ENCODE measurements at regions of chr4 and their contacts with region 1.

Region 1: DNA sequence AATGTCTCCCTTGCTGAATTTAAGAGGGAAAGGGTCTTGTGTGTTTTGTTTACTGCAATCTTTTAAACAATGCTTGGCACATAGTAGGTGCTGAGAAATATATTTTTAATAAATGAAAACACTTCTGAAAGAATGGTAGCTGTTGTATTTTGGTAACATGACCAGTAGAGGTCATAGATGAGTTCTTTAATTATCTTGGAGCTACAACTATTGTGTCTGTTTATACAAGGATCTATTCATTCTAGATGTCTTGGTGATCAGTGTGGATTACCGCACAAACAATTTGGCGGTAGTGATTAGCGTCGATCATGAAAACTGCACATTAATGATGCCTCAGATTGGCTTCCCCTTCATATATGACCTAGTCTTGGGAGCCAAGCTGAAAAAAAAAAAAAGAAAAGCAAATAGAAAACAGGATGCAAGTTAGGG is 21.4 kb upstream of the SCRG1 start:
- DNase-seq: no peak
- ATAC-seq: no peak
- H3K4me3 Mint-ChIP-seq: no peak overlapping the region
- H3K27ac Mint-ChIP-seq: no peak overlapping the region
- H3K4me1 Mint-ChIP-seq: peaks cover 3% of the 10 kb centered on the region
- H3K27me3 Mint-ChIP-seq: no peaks in the 10 kb centered on the region
- CTCF ChIP-seq: no peak

Region 2: GRCh38 chr4:173025131-173025530 is 395.2 kb before region 1 on chr4:
- CTCF ChIA-PET with region 1: no interaction called
- POLR2A ChIA-PET with region 1: no interaction called
- intact Hi-C with region 1: loop called (anchors 1 kb)
- DNase-seq: no peak
- ATAC-seq: no peak
- H3K4me3 Mint-ChIP-seq: no peak overlapping the region
- H3K27ac Mint-ChIP-seq: no peak overlapping the region
- H3K4me1 Mint-ChIP-seq: peaks cover 3% of the 10 kb centered on the region
- H3K27me3 Mint-ChIP-seq: no peaks in the 10 kb centered on the region
- CTCF ChIP-seq: no peak

Region 3: GRCh38 chr4:173074501-173074946 is 345.8 kb before region 1 on chr4:
- CTCF ChIA-PET with region 1: no interaction called
- POLR2A ChIA-PET with region 1: no interaction called
- intact Hi-C with region 1: no loop called
- DNase-seq: no peak
- ATAC-seq: no peak
- H3K4me3 Mint-ChIP-seq: no peak overlapping the region
- H3K27ac Mint-ChIP-seq: no peak overlapping the region
- H3K4me1 Mint-ChIP-seq: no peaks in the 10 kb centered on the region
- H3K27me3 Mint-ChIP-seq: no peaks in the 10 kb centered on the region
- CTCF ChIP-seq: no peak

Region 4: DNA sequence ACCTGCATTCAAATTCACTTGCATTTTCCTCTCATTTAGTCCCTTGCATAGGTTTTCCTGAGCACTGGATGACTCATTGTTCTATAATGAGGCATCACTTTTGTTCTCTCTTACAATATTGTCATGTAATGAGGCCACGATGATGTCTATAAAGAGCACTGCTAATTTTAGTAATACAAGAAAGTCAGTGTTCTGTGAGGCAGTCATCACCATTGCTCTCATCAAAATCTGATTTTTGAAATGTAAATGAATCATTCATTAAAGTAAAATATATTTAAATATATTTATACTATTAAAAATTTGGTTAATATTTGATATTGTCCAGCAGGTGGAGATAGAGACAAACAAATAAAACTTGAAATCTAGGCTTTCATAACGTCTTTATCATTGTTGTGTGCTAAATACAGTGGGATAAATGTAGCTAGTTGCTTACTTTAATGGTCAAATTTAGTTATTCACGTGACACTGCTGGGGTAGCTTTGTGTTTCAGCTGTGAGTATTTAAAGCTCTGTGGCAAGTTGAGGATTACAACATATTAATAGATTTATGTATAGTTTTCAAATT is 101.6 kb before region 1 on chr4:
- CTCF ChIA-PET with region 1: interaction called, 139 read pairs
- POLR2A ChIA-PET with region 1: no interaction called
- intact Hi-C with region 1: loop called (anchors 1 kb)
- DNase-seq: no peak
- ATAC-seq: no peak
- H3K4me3 Mint-ChIP-seq: no peak overlapping the region
- H3K27ac Mint-ChIP-seq: no peak overlapping the region
- H3K4me1 Mint-ChIP-seq: no peaks in the 10 kb centered on the region
- H3K27me3 Mint-ChIP-seq: no peaks in the 10 kb centered on the region
- CTCF ChIP-seq: peak; percentile 48

Region 5: GRCh38 chr4:173432430-173432829 is 12.1 kb after region 1 on chr4:
- CTCF ChIA-PET with region 1: no interaction called
- POLR2A ChIA-PET with region 1: no interaction called
- intact Hi-C with region 1: no loop called
- DNase-seq: no peak
- ATAC-seq: no peak
- H3K4me3 Mint-ChIP-seq: no peak overlapping the region
- H3K27ac Mint-ChIP-seq: no peak overlapping the region
- H3K4me1 Mint-ChIP-seq: no peaks in the 10 kb centered on the region
- H3K27me3 Mint-ChIP-seq: no peaks in the 10 kb centered on the region
- CTCF ChIP-seq: no peak

Region 6: DNA sequence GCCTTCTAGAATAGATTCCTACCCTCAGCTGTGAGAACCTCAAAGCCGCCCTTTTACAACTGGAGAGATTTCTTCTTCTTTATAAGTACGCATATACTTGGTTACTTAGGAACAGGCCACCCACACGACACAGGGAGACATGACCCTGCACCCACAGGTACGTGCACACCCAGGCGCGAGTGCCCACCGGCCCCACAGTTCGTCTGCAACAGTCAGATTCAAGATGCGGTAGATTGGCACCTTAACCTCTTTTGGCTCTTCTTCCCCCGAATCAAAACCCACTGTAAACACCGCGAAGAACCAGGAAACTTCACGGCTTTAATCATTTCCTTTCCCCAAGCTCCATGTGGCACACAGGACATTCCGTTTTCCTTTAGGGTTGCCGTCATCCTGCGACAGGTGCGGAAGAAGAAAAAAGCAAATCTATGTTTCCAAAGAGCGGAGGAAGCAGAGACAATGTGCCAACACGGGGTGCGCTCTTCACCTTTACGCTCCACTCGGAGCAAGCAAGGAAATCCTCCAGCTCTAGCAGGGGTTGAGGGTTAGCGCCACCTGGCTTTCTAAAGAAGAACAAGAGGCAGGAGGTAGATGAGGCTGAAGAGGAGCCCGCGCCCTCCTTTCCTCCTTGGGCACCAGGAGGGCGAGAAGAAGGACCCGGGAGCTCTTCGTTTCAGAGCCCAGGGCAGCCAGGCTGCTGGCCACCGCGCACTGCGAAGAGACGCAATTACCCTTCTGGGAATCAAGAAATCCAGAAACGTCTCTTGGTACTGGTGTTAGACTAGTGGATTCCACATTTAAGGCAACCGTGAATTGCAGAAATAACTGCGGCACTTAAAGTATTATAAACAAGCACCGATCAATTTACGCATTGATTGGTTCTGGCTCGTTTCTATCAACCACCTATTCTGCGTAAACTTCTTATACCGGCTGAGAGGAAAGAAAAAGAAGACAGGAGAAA is 74.0 kb after region 1 on chr4:
- CTCF ChIA-PET with region 1: interaction called, 10 read pairs
- POLR2A ChIA-PET with region 1: interaction called, 4 read pairs
- intact Hi-C with region 1: loop called (anchors 1 kb)
- DNase-seq: no peak
- ATAC-seq: peak; percentile 86
- H3K4me3 Mint-ChIP-seq: peak overlapping the region; percentile 83
- H3K27ac Mint-ChIP-seq: peak overlapping the region; percentile 37
- H3K4me1 Mint-ChIP-seq: peaks cover 23% of the 10 kb centered on the region
- H3K27me3 Mint-ChIP-seq: peaks cover 15% of the 10 kb centered on the region
- CTCF ChIP-seq: no peak

Region 7: DNA sequence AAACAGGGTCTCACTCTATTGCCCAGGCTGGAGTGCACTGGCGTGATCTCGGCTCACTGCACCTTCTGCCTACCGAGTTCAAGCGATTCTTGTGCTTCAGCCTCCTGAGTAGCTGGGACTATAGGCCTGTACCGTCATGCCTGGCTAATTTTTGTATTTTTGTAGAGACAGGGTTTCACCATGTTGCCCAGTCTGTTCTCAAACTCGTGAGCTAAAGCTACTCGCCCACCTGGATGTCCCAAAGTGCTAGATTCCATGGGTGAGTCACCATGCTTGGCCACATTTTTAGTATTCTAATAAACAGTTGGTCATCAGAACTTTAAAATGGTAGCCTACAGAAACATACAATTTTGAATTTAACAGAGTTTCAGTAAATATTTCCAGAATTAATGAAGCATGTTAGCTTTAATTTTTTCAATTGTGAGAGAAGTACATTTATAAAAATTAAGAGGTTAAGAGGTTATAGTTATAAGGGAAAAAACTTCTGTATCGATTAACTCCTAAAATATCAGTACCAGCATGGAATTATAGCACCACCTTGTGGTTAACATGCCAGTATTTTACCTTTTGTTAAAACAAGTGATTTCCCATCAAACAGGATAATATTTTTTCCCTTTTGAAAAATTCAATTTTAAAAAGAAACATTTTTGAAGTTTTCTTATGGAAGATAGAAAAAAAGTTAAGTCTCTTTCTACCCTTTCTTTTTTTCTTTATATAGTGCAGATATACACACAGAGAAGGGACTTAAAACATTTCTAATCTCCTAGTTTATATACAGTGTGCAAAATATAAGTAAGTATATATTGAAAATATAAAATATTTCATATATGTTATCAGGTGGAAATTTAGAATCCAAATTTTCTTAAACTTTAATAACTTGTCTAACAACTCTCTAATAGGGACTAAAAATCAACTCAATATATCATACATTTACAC is 898.8 kb after region 1 on chr4:
- CTCF ChIA-PET with region 1: no interaction called
- POLR2A ChIA-PET with region 1: no interaction called
- intact Hi-C with region 1: loop called (anchors 1 kb)
- DNase-seq: no peak
- ATAC-seq: no peak
- H3K4me3 Mint-ChIP-seq: no peak overlapping the region
- H3K27ac Mint-ChIP-seq: no peak overlapping the region
- H3K4me1 Mint-ChIP-seq: no peaks in the 10 kb centered on the region
- H3K27me3 Mint-ChIP-seq: no peaks in the 10 kb centered on the region
- CTCF ChIP-seq: no peak

Region 8: DNA sequence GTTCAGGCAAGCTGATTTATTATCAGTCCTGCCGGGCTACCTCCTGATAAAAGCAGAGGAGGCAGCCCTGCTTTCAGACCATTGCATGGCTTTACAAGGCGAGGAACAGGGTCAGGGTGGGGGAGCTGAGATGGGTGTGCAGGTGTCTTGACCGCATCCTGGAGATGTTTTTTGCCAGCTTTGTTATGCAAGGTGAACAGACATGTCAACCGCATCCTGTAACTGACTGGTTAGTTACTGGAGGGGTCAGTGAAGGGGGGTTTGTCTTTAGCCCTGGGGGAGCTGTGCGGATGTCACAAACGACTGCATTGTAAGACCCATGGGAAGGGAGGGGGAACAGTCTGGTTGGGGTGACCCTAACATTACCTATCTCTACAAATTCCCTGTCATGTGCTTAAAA is 1507.8 kb after region 1 on chr4:
- CTCF ChIA-PET with region 1: no interaction called
- POLR2A ChIA-PET with region 1: no interaction called
- intact Hi-C with region 1: no loop called
- DNase-seq: no peak
- ATAC-seq: peak; percentile 71
- H3K4me3 Mint-ChIP-seq: peak overlapping the region; percentile 16
- H3K27ac Mint-ChIP-seq: peak overlapping the region; percentile 79
- H3K4me1 Mint-ChIP-seq: peaks cover 31% of the 10 kb centered on the region
- H3K27me3 Mint-ChIP-seq: no peaks in the 10 kb centered on the region
- CTCF ChIP-seq: no peak

Measured in activated B cell treated with CpG ODN at 0.5 μM for 24 hours (primary cell).